ENCODE measurements at regions of chr11 and their contacts with region 1.

Region 1: DNA sequence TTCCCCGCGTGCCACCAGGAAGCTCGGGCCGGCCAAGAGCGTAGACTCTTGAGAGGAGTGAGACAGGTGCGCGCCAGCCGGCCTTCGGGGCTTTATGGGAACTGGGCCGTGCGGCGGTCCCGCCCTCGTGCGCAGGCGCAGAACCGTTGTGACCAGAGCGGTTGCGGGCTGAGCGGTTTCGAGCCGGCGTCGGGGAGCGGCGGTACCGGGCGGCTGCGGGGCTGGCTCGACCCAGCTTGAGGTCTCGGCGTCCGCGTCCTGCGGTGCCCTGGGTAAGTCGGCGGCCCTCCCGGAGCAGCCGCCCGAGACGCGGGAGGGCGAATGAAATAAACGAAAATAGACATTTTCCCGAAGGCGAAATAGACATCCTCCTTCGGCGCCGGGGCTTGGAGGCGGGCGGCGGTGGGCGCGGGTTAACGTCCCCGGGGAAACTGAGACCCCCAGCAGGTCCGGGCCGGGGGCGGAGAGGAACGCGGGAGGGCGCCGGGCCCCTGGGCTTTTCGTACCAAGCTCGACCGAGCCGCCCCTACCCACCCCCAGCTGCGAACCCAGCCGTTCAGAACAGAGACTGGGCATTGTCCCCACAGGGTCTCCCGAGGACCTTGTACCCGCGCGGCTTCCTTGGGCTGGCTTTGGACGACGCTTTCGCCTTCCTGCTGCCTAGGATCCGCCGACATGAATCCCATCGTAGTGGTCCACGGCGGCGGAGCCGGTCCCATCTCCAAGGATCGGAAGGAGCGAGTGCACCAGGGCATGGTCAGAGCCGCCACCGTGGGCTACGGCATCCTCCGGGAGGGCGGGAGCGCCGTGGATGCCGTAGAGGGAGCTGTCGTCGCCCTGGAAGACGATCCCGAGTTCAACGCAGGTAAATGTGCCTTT is at the start of gene ASRGL1:
- DNase-seq: peak; percentile 96
- total RNA-seq, gene ASRGL1: 9.2 TPM

Region 2: DNA sequence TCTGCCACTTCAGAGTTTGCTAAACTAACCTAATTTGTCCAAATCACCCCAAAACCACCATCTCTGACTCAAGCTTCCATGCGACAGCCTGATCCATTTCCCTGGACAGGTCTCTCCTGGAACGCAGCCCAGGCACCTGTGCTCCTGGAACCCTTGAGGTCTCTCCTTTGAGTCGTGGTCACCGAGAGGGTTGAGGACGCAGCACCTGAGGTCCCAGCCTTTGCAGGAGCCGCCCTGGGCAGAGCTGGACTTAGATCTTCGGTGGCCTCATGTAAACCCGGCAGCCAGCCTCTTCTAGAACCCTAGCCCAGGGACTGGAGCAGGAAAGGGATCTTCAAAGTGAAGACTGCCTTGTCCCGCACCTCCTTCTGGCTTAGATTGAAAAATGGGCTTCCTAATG is 37.3 kb after region 1 on chr11:
- intact Hi-C with region 1: loop called (anchors 5 kb)
- DNase-seq: no peak